ENCODE measurements at regions of chr12 and their contacts with region 1.

Region 1: DNA sequence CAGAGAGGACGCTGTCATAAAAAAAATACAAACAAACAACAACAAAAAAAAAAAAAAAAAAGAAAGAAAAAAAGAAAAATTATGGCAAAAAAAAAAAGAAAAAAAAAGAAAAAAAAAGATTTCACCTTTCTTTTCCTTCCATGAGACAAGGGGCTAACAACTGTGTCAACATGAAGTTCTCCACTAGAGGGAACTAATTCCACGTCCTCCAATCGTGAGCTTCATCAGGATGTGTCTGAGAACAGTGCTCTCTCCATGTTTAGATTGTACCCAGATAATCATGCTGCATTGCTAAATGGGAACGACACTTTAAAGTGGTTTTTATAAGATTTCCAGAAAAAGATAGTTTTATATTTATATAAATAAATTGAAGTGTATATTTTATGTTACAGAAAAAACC is 96.2 kb upstream of the PTPRB start:
- DNase-seq: peak in 1 of 10 donors; percentile 37

Region 2: DNA sequence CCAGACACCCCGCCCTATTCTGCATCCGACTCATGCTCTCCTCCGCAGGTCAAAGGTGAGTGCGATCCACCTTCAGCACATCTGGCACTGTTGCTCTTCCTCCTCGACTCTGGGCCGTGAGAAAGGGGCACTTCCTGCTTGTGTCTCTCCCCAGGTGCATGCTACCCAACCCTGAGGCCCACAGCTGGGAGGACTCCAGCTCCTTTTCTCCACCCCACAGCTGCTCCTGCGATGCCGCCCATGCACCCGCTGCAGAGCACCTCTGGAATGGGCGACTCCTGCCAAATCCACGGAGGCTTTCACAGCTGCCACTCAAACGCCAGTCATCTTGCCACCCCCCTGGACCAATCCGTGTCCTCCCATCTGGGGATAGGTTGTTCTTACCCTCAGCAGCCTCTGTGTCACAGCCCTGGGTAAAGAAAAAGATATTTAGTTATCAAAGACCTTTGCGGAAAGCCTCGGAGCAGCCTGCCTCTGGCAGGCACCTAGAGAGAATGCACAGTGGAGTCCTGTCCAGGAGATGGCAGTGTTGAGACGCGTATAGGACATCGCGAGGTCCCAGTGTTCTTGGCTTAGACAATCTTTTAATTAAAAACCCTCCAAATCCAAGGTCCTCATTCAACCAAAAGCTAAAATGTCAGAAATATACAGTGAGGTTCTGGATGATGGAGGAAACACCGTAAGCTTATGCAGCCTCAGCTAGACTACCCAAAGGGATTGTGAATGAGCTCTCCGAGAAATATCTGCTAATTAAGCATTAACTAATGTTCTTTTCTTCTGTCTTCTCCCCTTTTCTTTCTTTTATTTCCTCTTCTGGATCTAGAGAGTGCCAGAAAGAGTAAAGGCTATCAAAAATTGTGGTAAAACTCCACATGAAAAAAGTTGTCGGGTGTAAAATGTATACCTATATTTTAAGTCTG is 854.1 kb before region 1 on chr12:
- intact Hi-C with region 1: loop called (anchors 1 kb)
- DNase-seq: peak; percentile 43 to 95 (median 80)

Region 3: GRCh38 chr12:70535896-70536374 is 197.4 kb before region 1 on chr12:
- intact Hi-C with region 1: no loop called
- DNase-seq: peak in 7 of 10 donors; percentile 49 to 92 (median 65)

Region 4: GRCh38 chr12:70849265-70849960 is 116.0 kb after region 1 on chr12:
- intact Hi-C with region 1: loop called (anchors 1 kb)
- DNase-seq: no peak

Region 5: DNA sequence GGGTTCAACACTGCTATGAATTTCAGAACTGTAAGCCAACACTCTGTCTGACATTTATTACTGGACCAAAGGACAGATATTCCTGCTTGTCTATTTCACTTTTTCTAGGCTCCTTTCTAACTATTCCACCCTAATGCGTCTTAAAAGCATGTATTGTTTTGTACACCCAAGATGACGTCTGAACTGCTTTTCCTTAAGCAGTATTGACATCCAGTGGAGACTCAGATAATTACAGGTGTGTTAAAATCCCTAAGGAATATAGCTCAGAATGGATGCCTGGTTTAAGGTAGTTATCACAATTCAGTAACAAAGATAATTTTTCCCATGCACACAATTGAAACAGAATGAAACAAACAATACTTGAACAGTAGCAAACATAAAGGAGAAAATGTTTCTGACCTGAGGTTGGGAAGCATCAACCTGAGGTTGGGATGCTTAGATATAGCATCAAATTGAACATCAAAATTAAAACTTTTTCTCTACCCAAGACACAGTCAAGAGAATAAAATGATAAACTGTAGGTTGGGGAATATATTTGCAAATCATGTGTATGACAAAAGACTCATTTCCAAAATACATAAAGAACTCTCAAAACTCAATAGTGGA is 280.9 kb after region 1 on chr12:
- intact Hi-C with region 1: loop called (anchors 2 kb)
- DNase-seq: no peak